Lower leg skin (tissue), 4 donors: ENCODE measurements at regions of chr2 and their contacts with region 1.

Region 1: GRCh38 chr2:110667071-110667470 is 10.8 kb downstream of the BUB1 start:
- DNase-seq: no peak
- H3K4me3 ChIP-seq: no peak overlapping the region
- CTCF ChIP-seq: no peak
- POLR2A ChIP-seq: no peak

Region 2: GRCh38 chr2:110653861-110654260 is 13.2 kb before region 1 on chr2:
- intact Hi-C with region 1: loop called (anchors 2 kb)
- DNase-seq: no peak
- H3K4me3 ChIP-seq: no peak overlapping the region
- CTCF ChIP-seq: no peak
- POLR2A ChIP-seq: no peak